ENCODE measurements at regions of chr11 and their contacts with region 1.

Region 1: DNA sequence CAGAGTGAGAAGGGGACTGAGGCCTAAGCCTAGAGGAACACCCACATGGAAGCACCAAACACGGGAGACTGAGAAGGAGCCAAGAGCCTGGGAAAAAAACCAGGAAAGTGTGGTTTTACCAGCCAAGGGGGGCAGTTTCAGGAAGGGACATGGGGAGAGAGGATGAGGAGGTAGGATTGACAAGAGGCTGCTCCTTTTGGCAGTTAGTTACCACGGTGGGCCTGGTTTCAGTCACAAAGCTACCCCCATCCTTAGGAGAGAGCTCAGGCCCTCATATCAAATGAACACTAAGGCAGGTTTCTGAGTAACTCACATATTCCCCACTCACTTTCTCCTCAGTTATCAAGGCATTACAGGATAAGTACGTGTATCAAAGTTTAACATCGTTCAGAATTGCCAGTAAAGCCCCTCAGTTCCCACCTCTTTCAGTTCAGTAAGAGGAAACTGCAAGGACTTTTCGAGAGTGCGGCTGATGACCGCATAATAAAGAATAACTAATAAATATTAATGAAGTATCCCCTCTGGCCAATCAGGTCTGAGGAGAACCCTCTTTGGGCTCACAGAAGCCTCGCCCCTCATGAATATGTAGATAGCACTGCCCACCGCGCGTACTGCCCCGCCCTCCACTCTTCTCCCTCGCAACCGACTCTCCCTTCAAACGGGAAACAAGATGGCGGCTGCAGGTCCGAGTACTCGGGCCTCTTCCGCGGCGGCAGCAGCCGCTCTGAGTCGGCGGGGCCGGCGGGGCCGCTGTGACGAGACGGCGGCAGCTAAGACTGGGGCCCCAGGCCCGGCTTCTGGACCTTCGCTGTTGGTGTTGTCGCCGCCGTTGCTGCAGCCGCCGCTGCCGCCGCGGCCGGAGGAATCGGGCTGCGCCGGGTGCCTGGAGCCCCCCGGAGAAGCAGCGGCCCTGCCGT is at the start of gene RNF169:
- DNase-seq: peak; percentile 59 to 88 (median 84)
- ATAC-seq: peak; percentile 100
- H3K4me3 ChIP-seq: peak within 1 kb of the TSS; percentile 73
- H3K4me3 Mint-ChIP-seq: peak within 1 kb of the TSS; percentile 81 to 99 (median 94)
- H3K27ac ChIP-seq: peak within 1 kb of the TSS; percentile 79
- H3K27ac Mint-ChIP-seq: peak within 1 kb of the TSS; percentile 84 to 97 (median 91)
- H3K4me1 ChIP-seq: peaks cover 16 to 29% of the 10 kb centered on the region in 2 donors
- H3K4me1 Mint-ChIP-seq: peaks cover 25 to 48% (median 42%) of the 10 kb centered on the region in 7 donors
- H3K27me3 ChIP-seq: no peaks in the 10 kb centered on the region
- H3K27me3 Mint-ChIP-seq: no peaks in the 10 kb centered on the region
- total RNA-seq, gene RNF169: 17.9 to 25.5 (median 22.2) TPM

Region 2: DNA sequence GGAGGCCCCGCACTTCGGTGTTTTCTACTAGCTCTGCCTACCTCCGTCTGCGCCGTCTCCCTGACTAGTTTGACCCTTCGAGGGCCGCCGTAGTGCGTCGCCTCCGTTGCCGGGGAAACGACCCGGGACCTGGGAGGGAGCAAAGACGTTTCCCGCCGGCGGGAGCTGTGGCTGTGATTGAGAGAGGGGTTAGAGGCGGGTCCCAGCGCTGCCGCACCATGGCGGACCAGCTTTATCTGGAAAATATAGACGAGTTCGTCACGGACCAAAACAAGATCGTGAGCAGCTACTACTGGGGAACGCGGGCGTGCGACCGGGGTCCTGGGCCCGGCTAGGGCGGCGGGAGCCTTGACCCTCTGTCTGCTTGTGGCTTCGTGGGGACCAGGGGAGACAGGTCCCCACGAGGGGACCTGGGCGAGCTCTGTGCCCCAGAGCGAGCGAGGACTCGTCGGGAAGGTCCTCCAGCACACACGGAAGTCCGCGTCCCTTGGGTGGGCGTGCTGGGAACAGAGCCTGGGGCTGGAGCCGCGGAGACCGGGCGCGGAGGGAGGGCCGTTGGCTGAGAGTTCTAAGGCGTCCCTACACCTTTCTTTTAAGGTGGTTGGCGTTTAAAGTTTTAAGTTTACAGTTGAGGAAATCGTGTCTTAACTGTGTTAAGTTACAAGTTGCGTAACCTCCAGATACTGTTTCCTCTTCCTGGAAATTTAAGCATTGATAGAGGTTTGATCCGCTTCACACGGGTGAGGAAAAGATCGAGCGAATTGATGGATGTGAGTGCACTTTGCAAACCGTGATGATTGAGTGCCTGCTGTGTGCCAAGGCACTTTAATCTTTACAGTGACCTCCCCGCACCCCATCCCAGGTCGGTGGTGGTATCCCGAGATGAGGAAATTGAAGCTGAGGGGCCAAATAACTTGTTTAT is 155.8 kb before region 1 on chr11 and contains the start of gene POLD3:
- CTCF ChIA-PET with region 1: no interaction called
- POLR2A ChIA-PET with region 1: no interaction called
- intact Hi-C with region 1: loop called (anchors 1 to 2 kb)
- DNase-seq: peak; percentile 83 to 97 (median 94)
- ATAC-seq: peak; percentile 99
- H3K4me3 ChIP-seq: peak within 1 kb of the TSS; percentile 98
- H3K4me3 Mint-ChIP-seq: peak within 1 kb of the TSS; percentile 90 to 100 (median 92)
- H3K27ac ChIP-seq: peak within 1 kb of the TSS; percentile 96
- H3K27ac Mint-ChIP-seq: peak within 1 kb of the TSS; percentile 90 to 99 (median 95)
- H3K4me1 ChIP-seq: peaks cover 9% of the 10 kb centered on the region in 2 donors
- H3K4me1 Mint-ChIP-seq: peaks cover 7 to 33% (median 27%) of the 10 kb centered on the region in 7 donors
- H3K27me3 ChIP-seq: no peaks in the 10 kb centered on the region
- H3K27me3 Mint-ChIP-seq: peaks cover 0 to 5% (median 0%) of the 10 kb centered on the region in 5 donors
- total RNA-seq, gene POLD3: 8.0 to 40.8 (median 14.7) TPM

Region 3: DNA sequence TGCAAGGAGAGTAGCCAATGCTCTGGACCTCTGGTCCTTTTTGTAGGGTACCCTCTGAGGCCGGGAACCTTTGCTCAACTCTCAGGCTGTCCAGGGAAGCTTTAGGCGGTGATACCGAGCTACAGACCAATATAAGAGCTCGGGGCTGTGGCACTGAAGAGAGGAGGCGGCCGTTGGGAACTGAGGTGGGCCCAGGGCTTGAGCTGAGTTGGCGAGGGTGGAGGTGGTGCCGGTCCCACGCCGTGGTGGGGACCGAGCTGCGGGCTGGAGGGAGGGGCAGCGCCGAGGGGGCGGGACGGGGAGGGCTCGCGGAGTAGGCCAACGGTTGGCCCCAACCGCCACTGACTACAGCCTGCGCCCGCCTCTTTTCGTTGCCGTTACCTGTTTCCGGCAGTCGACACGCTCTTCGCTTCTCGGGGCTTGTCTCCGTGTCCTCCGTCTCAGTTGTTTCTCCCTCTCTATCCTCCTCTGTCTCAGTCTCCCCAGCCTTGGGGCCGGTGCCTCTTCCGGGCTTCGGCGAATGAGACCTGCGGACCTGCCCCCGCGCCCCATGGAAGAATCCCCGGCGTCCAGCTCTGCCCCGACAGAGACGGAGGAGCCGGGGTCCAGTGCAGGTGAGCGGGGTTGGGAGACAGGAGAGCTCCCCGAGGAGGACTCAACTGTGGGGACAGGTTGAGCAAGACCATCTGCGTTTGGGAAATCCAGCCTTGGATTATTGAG is 240.2 kb after region 1 on chr11 and contains the start of gene NEU3:
- CTCF ChIA-PET with region 1: no interaction called
- POLR2A ChIA-PET with region 1: no interaction called
- intact Hi-C with region 1: loop called (anchors 2 kb)
- DNase-seq: peak; percentile 64 to 82 (median 78)
- ATAC-seq: peak; percentile 97
- H3K4me3 ChIP-seq: peak within 1 kb of the TSS; percentile 96
- H3K4me3 Mint-ChIP-seq: peak within 1 kb of the TSS; percentile 88 to 97 (median 93)
- H3K27ac ChIP-seq: peak within 1 kb of the TSS; percentile 81
- H3K27ac Mint-ChIP-seq: peak within 1 kb of the TSS; percentile 75 to 94 (median 89)
- H3K4me1 ChIP-seq: peaks cover 8 to 16% of the 10 kb centered on the region in 2 donors
- H3K4me1 Mint-ChIP-seq: peaks cover 16 to 37% (median 31%) of the 10 kb centered on the region in 7 donors
- H3K27me3 ChIP-seq: no peaks in the 10 kb centered on the region
- H3K27me3 Mint-ChIP-seq: no peaks in the 10 kb centered on the region
- total RNA-seq, gene NEU3: 12.6 to 18.9 (median 16.1) TPM